Adrenal gland (tissue), 19 donors: ENCODE measurements at regions of chr20 and their contacts with region 1.

Region 1: GRCh38 chr20:208942-209566 is 18.0 kb upstream of the DEFB129 start:
- DNase-seq: peak in 4 of 7 donors; percentile 14 to 26 (median 20)
- H3K4me3 ChIP-seq: no peak overlapping the region
- H3K27ac ChIP-seq: no peak overlapping the region
- H3K4me1 ChIP-seq: no peaks in the 10 kb centered on the region
- H3K27me3 ChIP-seq: no peaks in the 10 kb centered on the region
- CTCF ChIP-seq: peak; percentile 22 to 68 (median 62)
- POLR2A ChIP-seq: no peak

Region 2: GRCh38 chr20:266596-267562 is 57.8 kb after region 1 on chr20:
- intact Hi-C with region 1: loop called in 1 of 2 experiments (anchors 5 kb)
- DNase-seq: peak; percentile 83 to 92 (median 87)
- H3K4me3 ChIP-seq: peak overlapping the region in 2 of 4 donors; percentile 28 to 49
- H3K27ac ChIP-seq: peak overlapping the region in 1 of 5 donors; percentile 42
- H3K4me1 ChIP-seq: peaks cover 0 to 10% of the 10 kb centered on the region in 2 donors
- H3K27me3 ChIP-seq: no peaks in the 10 kb centered on the region
- CTCF ChIP-seq: peak; percentile 87 to 95 (median 92)
- POLR2A ChIP-seq: no peak

Region 3: DNA sequence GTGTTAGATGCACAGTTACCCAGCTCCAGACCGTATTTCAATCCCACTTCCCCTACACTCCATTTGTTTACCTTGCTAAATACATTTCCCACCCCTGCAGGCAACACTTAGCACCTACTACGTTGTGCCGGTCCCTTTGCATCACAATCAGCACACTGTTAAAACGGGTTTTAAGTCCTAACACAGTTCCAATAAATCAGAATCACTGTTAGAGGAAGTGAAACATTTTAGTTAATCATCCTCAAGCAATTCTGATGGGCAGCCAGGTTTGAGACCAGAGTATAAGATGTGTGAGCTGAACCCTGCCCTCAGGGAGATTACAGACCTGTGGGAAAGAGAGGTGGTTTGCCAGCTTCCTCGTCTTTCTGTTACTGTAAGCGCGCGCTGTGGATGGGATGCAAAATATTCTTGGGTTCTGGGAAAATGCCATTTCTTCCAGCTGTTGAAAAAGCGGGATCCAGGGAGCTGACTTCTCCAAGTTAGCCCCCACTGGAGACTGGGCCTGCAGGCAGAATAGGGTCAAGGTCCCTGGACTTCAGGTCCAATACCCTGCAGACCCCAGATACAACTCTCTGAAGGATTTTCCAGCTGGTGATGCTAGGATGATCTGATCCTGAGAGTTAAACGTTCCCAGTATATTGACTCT is 91.4 kb after region 1 on chr20:
- intact Hi-C with region 1: no loop called
- DNase-seq: no peak
- H3K4me3 ChIP-seq: peak overlapping the region in 1 of 4 donors; percentile 94
- H3K27ac ChIP-seq: peak overlapping the region in 2 of 5 donors; percentile 62 to 99
- H3K4me1 ChIP-seq: peaks cover 40 to 41% of the 10 kb centered on the region in 2 donors
- H3K27me3 ChIP-seq: no peaks in the 10 kb centered on the region
- CTCF ChIP-seq: no peak
- POLR2A ChIP-seq: no peak

Region 4: DNA sequence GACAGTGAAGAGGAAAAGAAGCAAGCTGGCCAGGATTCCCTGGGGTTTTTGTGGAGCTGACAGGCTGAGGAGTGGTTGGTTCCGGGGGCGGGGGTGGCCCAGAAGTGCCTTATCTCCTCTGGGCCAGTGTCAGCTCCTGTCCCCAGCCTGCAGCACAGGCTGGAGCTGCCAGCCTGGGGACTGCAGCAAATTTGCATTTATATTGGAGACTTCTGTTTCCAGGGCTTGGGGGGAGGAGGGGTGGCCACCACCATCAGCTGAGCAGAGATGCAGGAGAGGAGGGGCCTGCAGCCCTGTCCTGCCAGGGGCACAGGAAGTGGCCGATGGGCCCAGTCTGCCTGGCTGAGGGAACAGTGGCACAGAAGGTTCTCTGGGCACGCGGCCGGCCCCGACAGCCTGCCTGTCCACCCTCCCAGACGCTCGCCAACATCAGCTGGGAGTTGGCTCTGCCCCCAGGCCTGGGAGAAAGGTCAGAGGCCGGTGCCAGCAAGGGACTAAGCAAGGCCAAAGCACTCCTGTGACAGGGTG is 490.8 kb after region 1 on chr20:
- intact Hi-C with region 1: no loop called
- DNase-seq: peak; percentile 53 to 87 (median 78)
- H3K4me3 ChIP-seq: no peak overlapping the region
- H3K27ac ChIP-seq: peak overlapping the region in 2 of 5 donors; percentile 31 to 58
- H3K4me1 ChIP-seq: peaks cover 4 to 10% of the 10 kb centered on the region in 2 donors
- H3K27me3 ChIP-seq: no peaks in the 10 kb centered on the region
- CTCF ChIP-seq: no peak
- POLR2A ChIP-seq: no peak